GM12878 (cell line): ENCODE measurements at regions of chr2 and their contacts with region 1.

Region 1: DNA sequence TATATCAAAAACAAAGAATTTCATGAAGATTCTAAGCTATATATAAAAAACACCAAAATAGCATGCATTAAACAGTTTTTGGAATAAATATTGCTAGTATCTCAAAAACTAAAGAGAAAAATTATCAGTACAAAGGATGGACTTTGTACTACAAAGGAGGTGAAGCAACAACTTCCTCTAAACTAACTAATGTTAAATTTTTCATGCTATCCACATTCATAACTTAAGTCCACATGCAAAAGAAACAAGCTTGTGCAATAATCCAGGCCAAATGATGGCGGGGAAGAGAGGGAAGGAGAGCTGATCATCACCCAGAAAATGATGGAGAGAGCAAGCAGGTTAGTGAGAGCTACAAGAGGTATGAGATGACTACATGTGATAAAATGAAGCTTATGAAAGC is 70.1 kb downstream of the KIDINS220 start:
- DNase-seq: no peak
- ATAC-seq: no peak
- H3K4me3 ChIP-seq: no peak overlapping the region
- H3K27ac ChIP-seq: no peak overlapping the region
- H3K4me1 ChIP-seq: no peaks in the 10 kb centered on the region
- H3K27me3 ChIP-seq: no peaks in the 10 kb centered on the region
- CTCF ChIP-seq: no peak
- EP300 ChIP-seq: no peak
- POLR2A ChIP-seq: no peak
- RAD21 ChIP-seq: no peak

Region 2: DNA sequence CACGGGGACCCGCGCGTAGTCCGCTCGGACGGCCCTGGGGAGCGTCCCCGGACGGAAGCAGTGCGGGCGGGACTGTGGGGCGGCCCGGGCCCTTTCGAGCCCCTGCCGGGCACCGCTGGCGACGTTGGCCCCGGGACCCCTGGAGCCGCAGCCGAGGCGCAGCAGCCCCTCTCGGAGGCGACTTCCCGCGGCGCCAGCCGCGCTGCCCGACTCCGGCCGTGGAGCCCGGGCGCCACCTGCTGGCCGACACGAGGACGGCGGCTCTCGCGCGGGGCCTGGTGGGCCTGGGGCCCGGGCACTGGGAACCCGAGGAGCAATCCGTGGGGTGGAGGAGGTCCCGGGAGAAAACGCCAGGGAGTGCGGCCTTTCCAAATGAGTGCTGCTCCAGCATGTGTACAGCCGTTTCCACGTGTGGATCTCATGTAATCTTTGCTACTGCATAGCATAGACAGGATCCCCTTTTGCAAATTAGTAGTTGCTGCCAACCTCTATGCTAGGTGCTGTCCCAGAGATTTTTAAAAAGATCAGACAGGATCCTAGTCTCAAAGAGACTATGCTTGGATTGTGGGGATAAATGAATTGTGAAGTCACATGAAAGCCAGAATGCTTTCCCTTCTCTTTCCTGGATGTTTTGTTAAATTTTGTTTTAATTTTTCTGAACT is 81.5 kb before region 1 on chr2:
- CTCF ChIA-PET with region 1: no interaction called
- POLR2A ChIA-PET with region 1: no interaction called
- RAD21 ChIA-PET with region 1: no interaction called
- SMC1A ChIA-PET with region 1: no interaction called
- in situ Hi-C with region 1: no loop called
- intact Hi-C with region 1: no loop called
- DNase-seq: no peak
- ATAC-seq: peak; percentile 45
- H3K4me3 ChIP-seq: peak overlapping the region; percentile 35
- H3K27ac ChIP-seq: peak overlapping the region; percentile 52
- H3K4me1 ChIP-seq: no peaks in the 10 kb centered on the region
- H3K27me3 ChIP-seq: no peaks in the 10 kb centered on the region
- CTCF ChIP-seq: peak; percentile 81 to 92 (median 84)
- EP300 ChIP-seq: peak in 1 of 2 experiments; percentile 12; a peak in 1 of 4 replicates
- POLR2A ChIP-seq: no peak
- RAD21 ChIP-seq: peak; percentile 99

Region 3: DNA sequence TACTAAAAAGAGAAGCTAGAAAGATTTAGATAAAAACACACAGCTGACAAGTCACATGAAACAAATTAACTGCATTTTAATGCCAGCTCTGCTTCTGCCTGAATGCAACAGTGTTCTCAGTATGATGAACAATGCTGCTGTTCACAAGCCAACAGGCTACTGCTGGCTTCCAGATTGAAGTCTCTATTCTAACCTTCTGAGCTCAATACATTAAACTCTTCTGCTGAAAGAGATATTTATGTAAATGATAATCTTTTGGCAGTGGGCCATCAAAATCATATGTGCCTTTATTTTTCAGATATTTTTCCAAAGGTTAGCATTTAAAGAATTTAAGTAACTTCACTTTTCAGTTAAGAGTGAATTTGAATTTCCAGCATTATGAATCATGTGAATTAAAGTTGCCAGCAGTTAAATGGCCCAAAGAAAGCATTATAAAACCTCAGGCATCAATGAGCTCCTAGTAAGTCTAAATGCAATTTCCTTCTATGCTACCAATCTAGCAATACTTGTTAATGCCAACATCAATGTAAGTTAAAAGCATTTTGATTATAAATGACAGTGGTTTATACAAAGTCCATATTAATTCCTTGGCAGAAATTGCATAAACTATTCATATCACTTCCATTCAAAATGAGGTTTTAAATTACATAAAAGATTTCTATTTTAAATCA is 13.1 kb before region 1 on chr2:
- CTCF ChIA-PET with region 1: interaction called, 4 read pairs
- POLR2A ChIA-PET with region 1: no interaction called
- RAD21 ChIA-PET with region 1: no interaction called
- SMC1A ChIA-PET with region 1: interaction called, 10 read pairs
- in situ Hi-C with region 1: no loop called
- intact Hi-C with region 1: no loop called
- DNase-seq: no peak
- ATAC-seq: peak; percentile 72
- H3K4me3 ChIP-seq: no peak overlapping the region
- H3K27ac ChIP-seq: no peak overlapping the region
- H3K4me1 ChIP-seq: peaks cover 18% of the 10 kb centered on the region
- H3K27me3 ChIP-seq: no peaks in the 10 kb centered on the region
- CTCF ChIP-seq: no peak
- EP300 ChIP-seq: no peak
- POLR2A ChIP-seq: no peak
- RAD21 ChIP-seq: no peak